Heart left ventricle (tissue), 16 donors: ENCODE measurements at regions of chr11 and their contacts with region 1.

Region 1: GRCh38 chr11:10575346-10576034 is 7.0 kb upstream of the LYVE1 start:
- DNase-seq: no peak
- ATAC-seq: no peak
- H3K4me3 ChIP-seq: no peak overlapping the region
- H3K27ac ChIP-seq: no peak overlapping the region
- H3K4me1 ChIP-seq: peaks cover 0 to 23% (median 8%) of the 10 kb centered on the region in 12 donors
- H3K27me3 ChIP-seq: no peaks in the 10 kb centered on the region
- CTCF ChIP-seq: no peak
- POLR2A ChIP-seq: no peak

Region 2: GRCh38 chr11:10514210-10514609 is 61.3 kb before region 1 on chr11:
- intact Hi-C with region 1: no loop called
- DNase-seq: no peak
- ATAC-seq: no peak
- H3K4me3 ChIP-seq: no peak overlapping the region
- H3K27ac ChIP-seq: no peak overlapping the region
- H3K4me1 ChIP-seq: peaks cover 0 to 10% (median under 1%) of the 10 kb centered on the region in 12 donors
- H3K27me3 ChIP-seq: no peaks in the 10 kb centered on the region
- CTCF ChIP-seq: peak in 11 of 12 donors; percentile 16 to 57 (median 42)
- POLR2A ChIP-seq: no peak

Region 3: DNA sequence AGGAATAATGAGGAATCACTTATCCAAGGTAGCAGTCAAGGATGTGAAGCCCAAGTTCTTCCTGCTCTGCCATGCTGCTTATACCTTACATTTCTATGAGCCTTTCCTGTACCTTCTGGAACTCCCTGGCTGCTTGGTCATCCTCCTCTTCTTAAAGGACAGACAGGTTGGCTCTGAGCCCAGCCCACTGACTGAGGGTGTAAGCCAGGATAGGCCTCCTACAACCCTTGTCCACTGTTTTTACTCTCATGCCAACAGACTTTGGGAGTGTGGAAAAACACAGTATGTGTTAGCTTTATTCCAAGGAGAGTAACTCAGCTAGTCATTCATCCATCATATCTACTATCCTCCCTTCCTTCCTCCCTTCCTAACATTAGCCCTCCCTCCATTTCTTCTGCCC is 70.5 kb after region 1 on chr11:
- intact Hi-C with region 1: loop called in 1 of 10 experiments (anchors 5 kb)
- DNase-seq: peak in 1 of 5 donors; percentile 51
- ATAC-seq: peak in 1 of 4 donors; percentile 54
- H3K4me3 ChIP-seq: no peak overlapping the region
- H3K27ac ChIP-seq: peak overlapping the region in 1 of 12 donors; percentile 50
- H3K4me1 ChIP-seq: peaks cover 0 to 20% (median 0%) of the 10 kb centered on the region in 12 donors
- H3K27me3 ChIP-seq: no peaks in the 10 kb centered on the region
- CTCF ChIP-seq: no peak
- POLR2A ChIP-seq: no peak